BJ (cell line): ENCODE measurements at regions of chr5 and their contacts with region 1.

Region 1: DNA sequence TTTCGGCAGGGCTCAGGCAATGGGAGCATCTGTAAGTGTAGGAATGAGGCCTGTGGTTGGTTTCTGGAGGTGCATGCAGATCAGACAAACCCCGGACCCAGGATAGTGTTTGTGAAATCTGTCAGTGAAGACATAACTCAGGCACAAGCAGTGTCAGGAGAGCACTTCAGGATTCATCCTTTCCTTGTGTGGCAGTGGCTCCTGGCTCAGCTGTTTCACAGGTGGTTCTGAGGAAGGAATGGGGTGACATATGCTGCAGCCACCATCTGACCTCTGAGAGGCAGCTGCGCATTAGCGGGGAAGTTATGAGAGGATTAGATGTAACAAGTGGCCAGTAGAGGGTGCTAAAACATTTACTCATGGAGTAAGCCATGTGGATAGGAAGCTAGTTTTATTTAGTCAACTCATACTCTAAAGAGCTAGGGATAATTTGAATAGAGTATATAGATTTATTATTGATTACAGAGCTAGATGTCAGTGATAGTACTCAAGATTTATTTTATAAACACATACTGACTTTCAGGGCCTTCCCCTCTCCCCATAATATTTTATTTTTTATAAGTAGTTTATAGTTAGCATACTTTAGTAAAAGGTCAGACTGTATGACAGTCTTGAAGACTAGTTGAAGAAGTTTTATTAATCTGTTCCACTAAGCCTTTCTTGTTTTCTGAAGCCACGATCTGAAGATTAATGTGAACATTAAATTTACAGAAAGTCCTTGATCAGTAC is 28.4 kb downstream of the NNT start:
- DNase-seq: no peak
- H3K4me3 ChIP-seq: no peak overlapping the region
- H3K27me3 ChIP-seq: no peaks in the 10 kb centered on the region
- CTCF ChIP-seq: peak; percentile 65

Region 2: DNA sequence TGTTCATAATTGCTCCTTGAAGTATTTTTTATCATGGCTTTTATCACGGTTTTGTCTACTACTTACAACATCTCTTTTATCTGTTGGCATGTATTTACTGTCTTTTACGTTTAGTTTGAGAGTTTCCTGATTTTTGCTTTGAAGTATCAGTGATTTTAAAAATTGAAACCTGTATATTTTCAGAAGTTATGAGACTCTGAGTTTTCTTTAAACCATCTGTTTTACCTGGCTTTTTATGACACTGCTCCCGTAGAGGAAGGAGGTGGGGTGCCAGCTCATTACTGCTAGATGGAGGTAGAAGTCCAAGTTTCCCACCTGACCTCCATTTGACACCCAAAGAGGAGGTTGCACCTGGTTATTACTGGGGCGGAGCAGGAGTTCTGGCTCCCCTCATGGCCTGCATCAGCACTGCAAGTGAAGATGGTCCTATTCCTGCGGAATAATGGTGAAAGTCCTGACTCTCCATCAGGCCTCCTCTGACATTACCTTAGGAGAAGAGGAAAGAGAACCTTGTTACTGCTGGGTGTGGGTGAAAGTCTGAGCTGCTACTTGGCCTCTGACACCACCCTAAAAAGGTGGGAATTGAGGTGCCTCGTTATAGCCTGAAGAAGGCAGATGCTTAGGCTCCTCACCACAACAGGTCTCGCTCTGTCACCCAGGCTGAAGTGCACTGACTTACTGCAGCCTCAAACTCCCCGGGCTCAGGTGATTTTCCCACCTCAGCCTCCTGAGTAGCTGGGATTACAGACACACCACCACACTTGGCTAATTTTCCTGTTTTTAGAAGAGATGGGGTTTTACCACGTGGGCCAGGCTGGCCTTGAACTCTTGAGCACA is 520.5 kb before region 1 on chr5:
- CTCF ChIA-PET with region 1: no interaction called
- POLR2A ChIA-PET with region 1: no interaction called
- DNase-seq: no peak
- H3K4me3 ChIP-seq: no peak overlapping the region
- H3K27me3 ChIP-seq: no peaks in the 10 kb centered on the region
- CTCF ChIP-seq: peak; percentile 33

Region 3: GRCh38 chr5:43619380-43619779 is 12.0 kb before region 1 on chr5:
- CTCF ChIA-PET with region 1: interaction called, 28 read pairs
- POLR2A ChIA-PET with region 1: interaction called, 4 read pairs
- DNase-seq: no peak
- H3K4me3 ChIP-seq: no peak overlapping the region
- H3K27me3 ChIP-seq: no peaks in the 10 kb centered on the region
- CTCF ChIP-seq: no peak

Region 4: DNA sequence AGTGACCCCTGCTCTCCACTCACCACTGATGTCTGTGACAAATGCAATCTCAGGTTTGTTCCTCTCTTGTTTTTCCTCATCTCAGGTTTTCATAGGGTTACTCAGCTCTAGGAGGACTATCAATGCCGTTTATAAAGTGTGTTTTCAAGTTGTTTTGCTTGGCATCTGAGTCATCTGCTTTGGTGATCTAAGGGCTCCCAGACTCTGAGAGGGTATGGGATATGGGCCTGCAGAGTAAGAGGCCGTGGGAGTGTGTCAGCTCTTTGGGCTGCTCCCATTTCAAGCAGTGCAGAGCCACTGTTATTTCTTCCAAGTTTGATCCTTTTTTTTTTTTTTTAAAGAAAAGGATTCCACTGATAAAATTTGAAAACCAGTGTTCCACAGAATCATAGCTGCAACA is 17.9 kb after region 1 on chr5:
- CTCF ChIA-PET with region 1: interaction called, 10 read pairs
- POLR2A ChIA-PET with region 1: no interaction called
- DNase-seq: no peak
- H3K4me3 ChIP-seq: no peak overlapping the region
- H3K27me3 ChIP-seq: no peaks in the 10 kb centered on the region
- CTCF ChIP-seq: no peak

Region 5: DNA sequence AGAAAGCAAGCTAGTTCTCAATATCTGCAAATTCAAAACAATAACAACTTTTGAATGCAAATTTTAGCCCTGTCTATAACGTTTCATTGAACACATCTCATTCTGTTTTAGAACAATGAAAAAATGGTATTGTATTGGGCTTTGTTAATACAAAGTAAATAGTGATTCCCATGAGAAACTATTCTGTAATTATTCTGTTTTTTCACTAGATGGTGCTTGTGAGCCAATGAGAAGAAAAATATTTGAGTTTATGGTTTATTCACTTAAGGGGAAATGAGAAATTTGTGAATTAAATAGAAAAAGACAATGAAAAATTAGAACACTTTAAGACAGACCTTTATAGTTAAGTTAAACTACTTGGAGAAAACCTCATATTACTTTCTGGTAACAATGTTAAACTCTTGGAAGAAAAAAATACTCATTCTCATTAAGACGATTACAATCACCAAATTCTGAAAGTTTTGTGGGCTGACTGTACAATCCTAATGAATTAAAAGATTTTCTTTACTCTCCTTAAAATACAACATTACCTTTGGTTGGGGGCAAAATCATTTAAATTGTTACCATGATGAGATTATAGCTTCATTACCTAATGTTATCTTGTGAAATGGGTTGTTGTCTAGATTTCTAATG is 98.6 kb after region 1 on chr5:
- CTCF ChIA-PET with region 1: interaction called, 15 read pairs
- POLR2A ChIA-PET with region 1: no interaction called
- DNase-seq: peak; percentile 17
- H3K4me3 ChIP-seq: no peak overlapping the region
- H3K27me3 ChIP-seq: no peaks in the 10 kb centered on the region
- CTCF ChIP-seq: peak; percentile 41

Region 6: GRCh38 chr5:44048276-44048984 is 417.1 kb after region 1 on chr5:
- CTCF ChIA-PET with region 1: no interaction called
- POLR2A ChIA-PET with region 1: no interaction called
- DNase-seq: peak; percentile 48
- H3K4me3 ChIP-seq: no peak overlapping the region
- H3K27me3 ChIP-seq: no peaks in the 10 kb centered on the region
- CTCF ChIP-seq: no peak

Region 7: DNA sequence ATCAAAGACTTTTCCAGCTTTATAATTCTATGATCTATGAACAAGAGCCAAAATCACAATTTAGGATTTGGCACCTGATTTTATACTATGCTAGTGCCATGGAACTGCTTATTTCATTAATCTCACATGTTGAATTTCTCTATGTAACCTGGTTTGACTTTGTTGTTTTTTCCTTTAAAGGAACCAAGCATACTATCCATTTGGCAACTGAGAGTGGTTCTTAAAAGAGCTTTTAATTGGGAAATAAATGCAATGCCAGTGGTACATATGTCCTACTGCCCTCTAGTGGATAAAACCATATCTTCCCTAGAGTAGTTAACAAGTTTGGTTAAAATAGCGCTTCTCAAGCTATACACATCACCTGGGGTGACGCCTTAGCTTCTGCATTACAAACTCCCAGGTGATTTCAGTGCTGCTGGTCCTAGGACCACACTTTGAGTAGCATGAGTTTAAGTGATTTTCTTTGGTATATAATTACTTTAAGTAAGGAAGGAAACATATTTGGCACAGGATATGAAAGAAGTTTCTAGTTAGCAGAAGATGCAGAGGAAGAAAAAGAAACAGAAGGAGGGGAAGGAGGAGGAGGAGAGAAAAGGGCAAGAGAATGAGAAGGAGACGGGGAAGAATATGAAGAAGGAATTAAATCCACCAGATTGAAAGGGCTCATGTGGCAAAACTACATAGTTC is 701.1 kb after region 1 on chr5:
- CTCF ChIA-PET with region 1: interaction called, 43 read pairs
- POLR2A ChIA-PET with region 1: no interaction called
- DNase-seq: no peak
- H3K4me3 ChIP-seq: no peak overlapping the region
- H3K27me3 ChIP-seq: no peaks in the 10 kb centered on the region
- CTCF ChIP-seq: peak; percentile 60